ENCODE measurements at regions of chr19 and their contacts with region 1.

Region 1: DNA sequence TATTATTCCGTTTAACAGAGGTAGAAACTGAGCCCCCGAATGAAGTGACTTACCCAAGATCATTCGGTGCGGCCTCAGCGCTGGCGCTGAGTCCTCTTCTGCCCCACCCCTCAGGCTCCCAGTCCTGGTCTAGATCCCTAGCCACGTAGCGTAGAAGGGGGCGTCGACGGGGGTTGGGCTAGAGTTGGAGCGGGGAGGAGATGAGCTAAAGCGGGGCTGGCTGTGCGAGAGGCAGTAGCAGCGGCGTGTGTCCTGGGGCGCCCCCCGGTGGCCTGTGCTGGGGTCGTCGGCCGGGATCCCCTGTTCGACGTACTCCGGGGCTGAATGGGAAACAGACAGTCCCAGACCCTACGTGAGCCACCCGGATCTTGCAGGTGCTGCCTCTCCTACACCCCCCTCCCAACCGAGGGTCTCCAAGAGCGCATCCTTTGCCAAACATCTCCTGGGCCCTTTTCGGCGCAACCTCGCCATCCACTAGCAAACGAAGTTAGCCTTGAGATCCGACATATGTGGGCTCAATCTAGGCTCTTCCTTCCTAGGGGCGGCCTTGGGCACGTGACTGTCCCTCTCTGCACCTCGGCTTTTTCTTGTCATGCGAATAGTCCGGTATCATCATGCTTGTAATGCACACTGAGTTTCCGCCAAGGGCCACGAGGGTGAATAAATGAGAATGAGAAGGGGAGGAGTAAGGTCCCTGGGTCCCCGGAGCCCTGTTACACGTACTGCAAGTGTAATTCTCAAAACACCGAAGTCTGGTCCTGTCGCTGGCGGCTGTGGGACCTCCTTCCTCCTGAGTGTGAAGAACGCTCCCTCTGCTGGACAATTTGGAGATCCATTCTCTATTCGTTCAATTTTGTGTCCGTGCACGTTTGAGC is 47.7 kb downstream of the CYP4F22 start:
- DNase-seq: peak; percentile 91 to 96 (median 94)
- H3K4me3 ChIP-seq: peak overlapping the region; percentile 52
- H3K4me3 Mint-ChIP-seq: peak overlapping the region; percentile 43 to 90 (median 87)
- H3K27ac ChIP-seq: peak overlapping the region; percentile 36
- H3K27ac Mint-ChIP-seq: peak overlapping the region; percentile 59 to 95 (median 94)
- H3K4me1 ChIP-seq: peaks cover 18% of the 10 kb centered on the region
- H3K4me1 Mint-ChIP-seq: peaks cover 16 to 25% (median 17%) of the 10 kb centered on the region in 3 donors
- H3K27me3 ChIP-seq: no peaks in the 10 kb centered on the region
- H3K27me3 Mint-ChIP-seq: no peaks in the 10 kb centered on the region

Region 2: GRCh38 chr19:15177269-15178116 is 378.5 kb before region 1 on chr19:
- CTCF ChIA-PET with region 1: interaction called, 13 read pairs
- POLR2A ChIA-PET with region 1: interaction called, 6 read pairs
- DNase-seq: peak; percentile 75 to 85 (median 79)
- H3K4me3 ChIP-seq: no peak overlapping the region
- H3K4me3 Mint-ChIP-seq: peak overlapping the region in 4 of 7 donors; percentile 32 to 67 (median 48)
- H3K27ac ChIP-seq: no peak overlapping the region
- H3K27ac Mint-ChIP-seq: peak overlapping the region in 2 of 8 donors; percentile 10 to 77
- H3K4me1 ChIP-seq: peaks cover 4% of the 10 kb centered on the region
- H3K4me1 Mint-ChIP-seq: peaks cover 4 to 5% (median 5%) of the 10 kb centered on the region in 3 donors
- H3K27me3 ChIP-seq: no peaks in the 10 kb centered on the region
- H3K27me3 Mint-ChIP-seq: peaks cover 8 to 10% of the 10 kb centered on the region in 2 donors

Region 3: GRCh38 chr19:15379083-15379995 is 176.7 kb before region 1 on chr19 and contains the start of gene AKAP8:
- CTCF ChIA-PET with region 1: interaction called, 17 read pairs
- POLR2A ChIA-PET with region 1: interaction called, 11 read pairs
- DNase-seq: peak; percentile 96 to 99 (median 98)
- H3K4me3 ChIP-seq: peak within 1 kb of the TSS; percentile 100
- H3K4me3 Mint-ChIP-seq: peak within 1 kb of the TSS; percentile 92 to 100 (median 100)
- H3K27ac ChIP-seq: peak within 1 kb of the TSS; percentile 97
- H3K27ac Mint-ChIP-seq: peak within 1 kb of the TSS; percentile 86 to 100 (median 100)
- H3K4me1 ChIP-seq: peaks cover 28% of the 10 kb centered on the region
- H3K4me1 Mint-ChIP-seq: peaks cover 29 to 49% (median 40%) of the 10 kb centered on the region in 3 donors
- H3K27me3 ChIP-seq: no peaks in the 10 kb centered on the region
- H3K27me3 Mint-ChIP-seq: peaks cover 0 to 1% of the 10 kb centered on the region in 2 donors
- total RNA-seq, gene AKAP8: 48.6 to 59.8 TPM

Region 4: DNA sequence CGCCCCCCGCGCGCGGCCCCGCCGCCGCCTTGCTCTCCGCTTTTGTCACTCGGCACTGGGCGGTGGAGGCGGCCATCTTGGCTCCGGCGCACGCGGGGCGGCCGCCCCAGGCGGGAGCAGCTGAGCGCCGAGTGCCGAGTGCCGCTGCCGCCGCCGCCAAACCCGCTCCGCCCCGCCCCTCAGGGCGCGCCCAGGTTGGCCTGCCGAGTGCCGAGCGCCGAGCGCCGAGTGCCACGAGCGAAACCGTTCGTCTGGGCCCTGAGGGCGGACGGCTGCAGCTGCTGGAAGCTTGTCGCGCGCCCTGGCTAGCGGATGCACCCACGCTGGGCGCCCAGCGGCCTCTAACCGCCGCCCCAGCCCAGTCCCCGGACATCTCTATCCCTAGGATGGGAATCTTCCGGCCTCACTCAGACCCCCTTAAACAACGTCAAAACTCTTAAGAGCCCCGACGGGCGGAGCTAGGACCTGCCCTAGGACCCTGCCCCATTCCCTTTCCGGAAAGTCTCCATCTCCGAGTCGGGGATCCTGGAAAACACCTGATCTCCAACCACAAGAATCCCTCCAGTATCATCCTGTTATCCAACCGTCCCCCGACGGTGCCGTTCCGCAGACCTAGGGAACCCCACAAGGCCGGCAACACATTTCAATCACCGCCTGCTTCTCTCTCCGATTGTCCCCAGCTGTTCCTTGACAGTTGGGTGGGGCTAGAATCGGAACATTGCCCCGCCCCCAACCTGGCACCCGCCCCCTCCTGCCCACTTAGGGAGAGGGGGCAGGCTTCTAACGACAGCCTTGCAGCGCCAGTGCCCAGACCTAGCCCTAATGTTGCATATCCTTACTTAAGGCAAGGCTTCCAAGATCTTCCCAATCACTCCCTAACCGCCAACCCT is 123.1 kb before region 1 on chr19:
- CTCF ChIA-PET with region 1: interaction called, 9 read pairs
- POLR2A ChIA-PET with region 1: interaction called, 11 read pairs
- DNase-seq: peak; percentile 87 to 94 (median 88)
- H3K4me3 ChIP-seq: peak overlapping the region; percentile 86
- H3K4me3 Mint-ChIP-seq: peak overlapping the region; percentile 88 to 99 (median 95)
- H3K27ac ChIP-seq: peak overlapping the region; percentile 79
- H3K27ac Mint-ChIP-seq: peak overlapping the region; percentile 83 to 99 (median 95)
- H3K4me1 ChIP-seq: peaks cover 24% of the 10 kb centered on the region
- H3K4me1 Mint-ChIP-seq: peaks cover 27 to 31% (median 30%) of the 10 kb centered on the region in 3 donors
- H3K27me3 ChIP-seq: no peaks in the 10 kb centered on the region
- H3K27me3 Mint-ChIP-seq: no peaks in the 10 kb centered on the region

Region 5: GRCh38 chr19:15466851-15467733 is 88.9 kb before region 1 on chr19:
- CTCF ChIA-PET with region 1: interaction called, 35 read pairs
- POLR2A ChIA-PET with region 1: interaction called, 13 read pairs
- DNase-seq: peak; percentile 22 to 72 (median 38)
- H3K4me3 ChIP-seq: no peak overlapping the region
- H3K4me3 Mint-ChIP-seq: peak overlapping the region; percentile 58 to 89 (median 76)
- H3K27ac ChIP-seq: no peak overlapping the region
- H3K27ac Mint-ChIP-seq: peak overlapping the region; percentile 82 to 98 (median 90)
- H3K4me1 ChIP-seq: peaks cover 60% of the 10 kb centered on the region
- H3K4me1 Mint-ChIP-seq: peaks cover 52 to 72% (median 65%) of the 10 kb centered on the region in 3 donors
- H3K27me3 ChIP-seq: no peaks in the 10 kb centered on the region
- H3K27me3 Mint-ChIP-seq: peaks cover 0 to 3% of the 10 kb centered on the region in 2 donors

Region 6: DNA sequence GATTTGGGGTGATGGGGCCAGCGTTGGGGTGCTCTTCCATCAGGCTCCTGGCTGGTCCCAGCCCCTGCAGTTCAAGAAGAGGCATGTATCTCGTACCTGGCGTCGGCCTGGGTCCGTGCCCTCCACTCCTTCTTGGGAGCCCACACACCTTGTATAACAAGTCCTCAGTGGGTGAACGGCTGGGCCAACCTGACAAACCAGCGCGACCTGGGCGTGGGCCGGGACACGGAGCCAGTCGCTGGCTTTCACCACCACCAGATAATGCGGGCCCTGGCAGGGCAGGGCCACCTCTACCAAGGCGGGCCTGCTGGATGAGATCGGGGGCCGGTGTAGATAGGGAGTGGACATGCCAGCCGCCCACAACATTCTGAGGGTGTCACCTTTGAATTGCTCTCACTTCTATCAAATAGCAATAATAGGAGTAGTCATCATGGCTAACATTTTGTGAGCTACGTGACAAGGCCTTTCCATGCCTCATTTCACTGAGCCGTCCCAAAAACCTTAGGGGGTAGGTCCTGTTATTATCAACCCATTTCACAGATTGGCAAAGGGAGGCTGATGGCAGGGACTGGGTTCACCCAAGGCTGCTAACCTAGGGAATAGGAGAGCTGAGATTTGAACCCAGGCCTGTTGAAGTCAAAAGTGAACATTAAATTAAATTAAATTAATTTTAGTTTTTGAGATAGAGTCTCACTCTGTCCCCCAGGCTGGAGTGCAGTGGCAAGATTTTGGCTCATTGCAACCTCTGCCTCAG is 44.1 kb before region 1 on chr19:
- CTCF ChIA-PET with region 1: interaction called, 13 read pairs
- POLR2A ChIA-PET with region 1: interaction called, 8 read pairs
- DNase-seq: no peak
- H3K4me3 ChIP-seq: no peak overlapping the region
- H3K4me3 Mint-ChIP-seq: peak overlapping the region in 1 of 7 donors; percentile 3
- H3K27ac ChIP-seq: no peak overlapping the region
- H3K27ac Mint-ChIP-seq: peak overlapping the region in 1 of 8 donors; percentile 10
- H3K4me1 ChIP-seq: peaks cover 16% of the 10 kb centered on the region
- H3K4me1 Mint-ChIP-seq: peaks cover 33 to 48% (median 46%) of the 10 kb centered on the region in 3 donors
- H3K27me3 ChIP-seq: no peaks in the 10 kb centered on the region
- H3K27me3 Mint-ChIP-seq: peaks cover 0 to 16% of the 10 kb centered on the region in 2 donors

Measured in CD8-positive, alpha-beta memory T cell (primary cell).